BJ (cell line): ENCODE measurements at regions of chr7 and their contacts with region 1.

Region 1: DNA sequence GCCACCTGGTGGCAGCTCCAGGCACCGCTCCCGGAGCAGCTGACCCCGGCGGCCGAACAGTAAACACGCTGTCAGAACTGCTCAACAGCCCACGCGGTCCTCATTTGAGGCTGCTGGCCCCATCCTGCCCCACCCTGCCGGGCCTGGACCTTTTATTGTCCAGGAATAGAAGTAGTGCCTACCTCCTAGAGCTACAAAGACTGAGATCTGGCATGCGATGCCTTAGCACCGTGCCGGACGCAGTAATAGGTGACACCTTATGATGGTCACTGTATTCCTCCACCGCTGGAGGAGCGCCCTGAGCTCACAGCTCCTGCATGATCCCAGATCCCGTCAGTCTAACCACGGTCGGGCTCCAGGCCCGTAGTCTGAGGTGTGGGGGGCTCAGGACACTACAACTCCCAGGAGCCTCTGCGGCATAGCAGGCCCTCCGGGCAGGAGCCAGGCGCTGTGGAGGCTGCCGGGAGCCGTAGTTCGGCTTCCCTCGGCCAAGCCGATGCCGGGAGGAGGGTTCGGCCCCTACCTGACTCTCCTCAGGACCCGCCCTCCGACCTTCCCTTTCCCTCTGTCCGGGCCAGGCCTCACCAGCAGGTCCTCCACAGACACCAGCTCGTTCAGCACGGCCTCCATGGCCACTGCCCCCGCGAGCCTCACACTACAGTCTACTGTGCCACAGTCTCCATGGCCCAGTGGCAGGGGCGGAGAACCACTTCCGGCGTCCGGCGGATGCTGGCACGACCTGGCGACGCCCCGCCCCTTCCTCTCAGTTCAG is at the start of gene FIS1:
- DNase-seq: peak; percentile 47
- H3K4me3 ChIP-seq: peak within 1 kb of the TSS; percentile 60
- H3K27me3 ChIP-seq: no peaks in the 10 kb centered on the region
- CTCF ChIP-seq: peak; percentile 92
- polyA plus RNA-seq, gene FIS1: 276 and 329 TPM in 2 replicates

Region 2: DNA sequence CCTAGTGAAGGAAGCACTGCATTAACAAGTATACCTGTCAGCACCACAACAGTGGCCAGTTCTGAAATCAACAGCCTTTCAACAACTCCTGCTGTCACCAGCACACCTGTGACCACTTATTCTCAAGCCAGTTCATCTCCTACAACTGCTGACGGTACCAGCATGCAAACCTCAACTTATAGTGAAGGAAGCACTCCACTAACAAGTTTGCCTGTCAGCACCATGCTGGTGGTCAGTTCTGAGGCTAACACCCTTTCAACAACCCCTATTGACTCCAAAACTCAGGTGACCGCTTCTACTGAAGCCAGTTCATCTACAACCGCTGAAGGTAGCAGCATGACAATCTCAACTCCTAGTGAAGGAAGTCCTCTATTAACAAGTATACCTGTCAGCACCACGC is 208.6 kb before region 1 on chr7:
- CTCF ChIA-PET with region 1: no interaction called
- POLR2A ChIA-PET with region 1: no interaction called
- DNase-seq: no peak
- H3K4me3 ChIP-seq: no peak overlapping the region
- H3K27me3 ChIP-seq: peaks cover 1% of the 10 kb centered on the region; the same call in 1 of the 2 replicates
- CTCF ChIP-seq: no peak

Region 3: GRCh38 chr7:101217388-101218235 is 26.9 kb before region 1 on chr7 and contains the starts of genes PLOD3 and ZNHIT1:
- CTCF ChIA-PET with region 1: interaction called, 22 read pairs
- POLR2A ChIA-PET with region 1: no interaction called
- DNase-seq: peak; percentile 88
- H3K4me3 ChIP-seq: peak within 1 kb of the TSS; percentile 63
- H3K27me3 ChIP-seq: no peaks in the 10 kb centered on the region
- CTCF ChIP-seq: no peak; the same call in 1 of the 2 replicates
- polyA plus RNA-seq, gene PLOD3: 90.9 and 187 TPM in 2 replicates
- polyA plus RNA-seq, gene ZNHIT1: 49.2 and 53.0 TPM in 2 replicates

Region 4: DNA sequence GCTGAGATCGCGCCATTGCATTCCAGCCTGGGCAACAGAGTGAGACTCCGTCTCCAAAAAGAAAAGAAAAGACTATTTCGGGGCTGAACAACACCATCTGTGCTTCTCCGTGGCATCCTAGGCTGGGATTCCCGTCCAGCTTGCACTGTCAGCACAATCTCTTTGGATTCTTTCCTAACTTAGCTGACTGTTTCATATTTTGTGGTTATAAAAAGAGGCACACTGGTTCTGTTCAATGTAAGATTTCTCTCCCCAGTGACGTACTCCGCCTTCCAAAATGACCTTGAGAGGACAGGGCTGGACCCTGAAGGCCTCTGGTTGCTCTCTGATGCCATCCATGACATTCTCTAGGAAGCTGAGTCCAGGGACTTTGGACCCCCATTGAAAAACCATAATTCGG is 17.8 kb before region 1 on chr7:
- CTCF ChIA-PET with region 1: interaction called, 11 read pairs
- POLR2A ChIA-PET with region 1: no interaction called
- DNase-seq: no peak
- H3K4me3 ChIP-seq: no peak overlapping the region
- H3K27me3 ChIP-seq: no peaks in the 10 kb centered on the region
- CTCF ChIP-seq: no peak

Region 5: GRCh38 chr7:101255796-101256195 is 11.2 kb after region 1 on chr7:
- CTCF ChIA-PET with region 1: interaction called, 11 read pairs
- POLR2A ChIA-PET with region 1: no interaction called
- DNase-seq: no peak
- H3K4me3 ChIP-seq: no peak overlapping the region
- H3K27me3 ChIP-seq: no peaks in the 10 kb centered on the region; the same call in 1 of the 2 replicates
- CTCF ChIP-seq: no peak